AG04449 (cell line): ENCODE measurements at regions of chr15 and their contacts with region 1.

Region 1: DNA sequence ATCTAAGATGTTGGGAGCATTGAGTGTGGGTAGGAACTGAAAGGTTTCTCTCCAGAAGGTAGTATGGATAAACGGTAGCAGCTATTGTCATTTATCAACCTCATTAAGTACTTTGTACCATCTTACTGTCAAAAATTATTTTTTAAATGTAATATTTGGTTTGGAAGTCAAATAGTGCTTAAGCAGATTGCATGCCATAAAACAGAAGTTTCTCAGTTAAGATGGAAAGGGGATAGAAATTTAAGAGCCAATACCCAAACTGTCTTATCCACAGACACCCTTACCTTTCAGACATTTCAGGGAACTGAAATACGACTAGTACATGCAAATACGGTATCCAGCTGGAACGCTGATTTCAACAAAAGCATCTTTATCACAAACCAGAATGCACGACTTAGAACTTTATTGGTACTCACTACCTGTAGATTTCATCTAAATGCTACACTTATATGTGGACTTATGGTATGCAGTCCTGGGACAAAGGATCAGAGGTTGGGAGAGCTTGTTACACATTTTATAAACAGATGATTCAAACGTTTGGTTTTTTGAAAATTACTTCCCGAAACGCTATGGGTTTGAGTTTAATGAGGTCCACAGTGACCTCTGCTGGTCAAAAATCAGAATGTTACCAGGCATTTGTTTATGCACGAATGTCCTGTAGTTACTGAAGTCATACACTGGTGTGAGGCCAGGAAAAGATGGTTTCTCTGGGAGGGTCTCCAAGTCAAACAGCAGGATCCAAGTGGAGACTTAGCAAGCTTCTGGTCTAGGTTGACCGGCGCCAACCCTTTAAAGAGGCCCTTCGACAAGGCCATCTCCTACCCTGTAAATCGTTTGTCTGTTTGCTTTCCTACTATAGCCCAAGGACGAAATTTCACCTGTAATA is 45.7 kb upstream of the DUT start:
- DNase-seq: peak; percentile 38
- H3K4me3 ChIP-seq: no peak overlapping the region
- CTCF ChIP-seq: peak; percentile 51

Region 2: DNA sequence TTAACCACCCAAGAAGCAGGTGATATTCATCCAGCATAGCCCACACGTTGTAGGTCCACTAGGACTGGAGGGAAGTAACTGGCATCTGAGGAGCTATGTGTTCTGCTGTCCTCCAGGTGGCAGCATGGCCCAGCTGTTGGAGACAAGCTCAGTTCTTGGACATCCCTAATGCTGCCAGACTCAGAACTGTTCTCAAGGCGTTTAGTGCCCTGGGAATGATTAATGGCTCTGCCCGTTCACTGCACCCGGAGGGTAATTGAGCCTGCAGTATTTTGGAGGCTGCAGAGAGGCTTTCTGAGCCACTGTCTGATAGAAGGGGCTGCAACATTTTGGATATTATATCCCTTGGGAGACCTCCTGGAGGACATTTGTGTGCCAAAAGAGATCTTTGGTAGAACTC is 1089.5 kb before region 1 on chr15:
- CTCF ChIA-PET with region 1: interaction called, 65 read pairs
- POLR2A ChIA-PET with region 1: no interaction called
- DNase-seq: peak; percentile 52
- H3K4me3 ChIP-seq: no peak overlapping the region
- CTCF ChIP-seq: peak; percentile 93

Region 3: GRCh38 chr15:48040166-48040817 is 245.3 kb before region 1 on chr15:
- CTCF ChIA-PET with region 1: no interaction called
- POLR2A ChIA-PET with region 1: no interaction called
- DNase-seq: no peak
- H3K4me3 ChIP-seq: no peak overlapping the region
- CTCF ChIP-seq: no peak

Region 4: DNA sequence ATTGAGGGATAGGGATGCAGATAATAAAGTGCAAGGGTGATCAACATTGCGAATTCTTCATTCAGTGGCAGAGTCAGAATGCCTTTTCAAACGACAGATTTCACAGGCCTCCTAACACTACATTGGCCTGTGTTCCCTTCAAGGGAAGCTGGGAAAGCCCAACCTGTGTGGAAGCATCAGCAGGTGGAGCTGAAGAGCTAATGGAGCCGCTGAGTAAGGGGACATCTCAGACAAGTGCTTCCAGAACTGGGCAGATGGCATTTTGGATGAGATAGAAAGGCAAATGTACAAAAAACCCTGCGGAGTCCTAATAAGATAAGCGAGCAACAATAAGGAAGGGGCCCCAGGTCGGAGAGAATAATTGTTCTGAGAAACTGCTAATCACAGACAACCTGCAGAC is 173.3 kb before region 1 on chr15:
- CTCF ChIA-PET with region 1: interaction called, 35 read pairs
- POLR2A ChIA-PET with region 1: no interaction called
- DNase-seq: no peak
- H3K4me3 ChIP-seq: no peak overlapping the region
- CTCF ChIP-seq: peak; percentile 48

Region 5: DNA sequence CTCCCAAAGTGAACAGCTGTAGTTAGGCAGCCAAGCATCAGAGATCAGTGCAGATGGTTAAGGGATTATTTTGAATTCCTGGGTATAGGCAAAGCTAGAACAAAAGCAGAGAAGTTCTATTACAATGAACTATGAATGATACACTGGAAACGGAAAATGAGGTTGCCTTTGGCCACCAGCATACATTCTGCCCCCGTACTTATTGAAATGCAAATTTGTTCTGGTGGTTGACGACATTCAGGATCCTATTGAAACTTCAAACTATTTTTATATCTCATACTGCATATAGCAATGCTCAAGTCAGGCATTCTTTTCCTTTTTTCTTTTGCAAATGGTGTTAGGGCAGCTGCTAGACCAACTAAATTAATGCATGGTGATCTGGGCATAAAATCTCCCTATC is 17.8 kb before region 1 on chr15:
- CTCF ChIA-PET with region 1: interaction called, 21 read pairs
- POLR2A ChIA-PET with region 1: no interaction called
- DNase-seq: no peak
- H3K4me3 ChIP-seq: no peak overlapping the region
- CTCF ChIP-seq: no peak

Region 6: GRCh38 chr15:48304398-48304797 is 18.8 kb after region 1 on chr15:
- CTCF ChIA-PET with region 1: interaction called, 18 read pairs
- POLR2A ChIA-PET with region 1: no interaction called
- DNase-seq: no peak
- H3K4me3 ChIP-seq: no peak overlapping the region
- CTCF ChIP-seq: no peak

Region 7: DNA sequence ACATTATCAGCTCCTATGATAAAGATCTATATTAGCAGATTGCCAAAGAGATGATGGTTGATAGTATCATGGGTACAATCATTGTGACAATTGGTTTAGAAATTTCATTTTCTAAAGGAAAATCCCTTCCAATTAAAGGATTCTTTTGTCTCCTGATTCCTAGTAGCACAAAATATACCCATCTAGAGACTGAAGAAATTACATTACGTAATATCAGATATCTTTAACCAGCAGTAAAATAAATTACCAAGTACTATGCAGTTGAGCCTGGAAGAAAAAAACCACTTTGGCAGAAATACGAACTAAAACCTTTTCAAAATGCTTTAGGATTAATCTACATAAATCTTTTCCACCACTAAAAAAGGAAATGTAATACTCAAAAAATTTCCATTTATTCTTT is 713.7 kb after region 1 on chr15:
- CTCF ChIA-PET with region 1: no interaction called
- POLR2A ChIA-PET with region 1: no interaction called
- DNase-seq: no peak
- H3K4me3 ChIP-seq: no peak overlapping the region
- CTCF ChIP-seq: no peak